ENCODE measurements at regions of chr2 and their contacts with region 1.

Region 1: GRCh38 chr2:27191053-27191829 is 20.6 kb upstream of the ATRAID start:
- H3K4me3 ChIP-seq: no peak overlapping the region
- H3K27ac ChIP-seq: no peak overlapping the region
- H3K4me1 ChIP-seq: peaks cover 3% of the 10 kb centered on the region; the same call in 1 of the 2 replicates
- CTCF ChIP-seq: peak; percentile 56; the same call in 1 of the 2 replicates

Region 2: DNA sequence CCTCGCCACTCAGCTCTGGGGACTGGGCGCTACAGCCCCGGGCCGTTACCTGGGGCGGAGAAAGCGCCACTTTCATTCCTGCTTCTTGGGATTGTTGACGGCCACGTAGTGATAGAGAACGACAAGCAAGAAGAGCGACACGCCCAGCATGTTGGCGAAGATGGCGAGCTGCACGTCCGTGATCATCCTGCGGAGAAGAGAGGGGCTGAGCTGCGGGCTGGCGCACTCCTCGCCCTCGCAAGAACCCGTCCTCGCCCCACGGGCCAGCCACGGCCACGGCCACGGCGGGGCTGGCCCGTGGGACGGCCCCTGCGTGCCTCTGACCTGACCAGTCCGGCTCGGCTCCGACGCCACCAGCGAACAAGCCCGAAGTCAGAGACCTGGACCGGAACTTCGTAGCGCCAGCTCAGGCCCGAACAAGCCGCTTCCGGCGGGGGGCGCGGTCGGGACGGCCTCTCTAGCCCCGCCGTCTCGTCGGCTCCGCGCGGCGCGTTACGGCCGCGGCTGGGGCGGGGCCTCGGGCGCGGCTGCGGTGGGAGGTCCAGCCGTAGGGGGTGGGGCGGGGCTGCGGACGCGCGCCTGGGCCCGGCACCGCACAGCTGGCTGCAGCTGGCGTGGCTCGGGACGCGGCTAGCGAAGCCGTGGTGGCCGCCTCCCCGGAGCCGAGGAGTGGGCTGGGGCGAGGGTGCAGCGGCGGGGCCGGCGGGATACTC is 119.8 kb before region 1 on chr2 and contains the start of gene OST4:
- CTCF ChIA-PET with region 1: no interaction called
- POLR2A ChIA-PET with region 1: no interaction called
- H3K4me3 ChIP-seq: peak within 1 kb of the TSS; percentile 90
- H3K27ac ChIP-seq: peak within 1 kb of the TSS; percentile 66; the same call in 1 of the 2 replicates
- H3K4me1 ChIP-seq: peaks cover 14% of the 10 kb centered on the region
- CTCF ChIP-seq: peak; percentile 76

Region 3: DNA sequence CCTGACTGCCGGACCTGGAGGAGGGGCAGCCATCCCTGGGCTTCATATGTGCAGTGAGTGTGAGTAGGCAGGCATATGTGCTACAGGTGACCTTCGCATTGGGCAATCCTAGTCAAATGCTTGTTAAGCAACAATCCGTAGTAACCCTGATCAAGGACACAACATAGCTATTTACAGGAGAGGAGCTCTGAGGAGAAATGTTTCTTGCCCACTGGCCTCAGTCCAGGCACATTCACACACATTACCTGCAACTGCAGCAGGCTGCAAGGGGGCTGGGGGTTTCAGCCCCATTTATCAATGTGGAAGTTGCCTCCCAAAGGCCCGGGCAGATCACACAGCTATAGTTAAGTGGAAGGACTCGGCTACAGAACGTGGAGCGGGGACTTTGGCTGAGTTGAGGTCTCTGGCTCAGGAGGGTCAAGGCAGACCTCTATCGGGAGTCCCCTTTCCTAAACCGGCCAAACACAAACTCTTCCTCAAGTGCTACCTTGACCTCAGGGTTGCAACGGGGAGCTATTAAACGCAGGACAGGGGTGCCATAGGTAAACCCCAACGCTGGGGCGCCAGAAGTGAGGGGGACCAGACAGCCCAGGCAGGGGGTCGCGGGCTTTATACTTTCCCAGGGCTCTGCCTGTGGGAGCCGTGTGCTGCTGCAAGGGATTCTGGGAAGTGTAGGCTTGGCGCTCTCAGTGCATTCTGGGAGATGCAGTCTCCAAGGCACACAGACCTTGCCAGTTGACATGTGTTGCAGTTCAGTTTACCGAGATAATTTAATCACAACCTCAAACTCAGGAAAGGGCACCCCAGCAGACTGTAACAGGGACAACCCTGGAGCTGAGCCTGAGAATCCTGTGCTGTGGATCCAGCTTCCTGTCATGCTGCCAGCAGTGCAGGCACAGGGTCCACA is 95.2 kb before region 1 on chr2:
- CTCF ChIA-PET with region 1: interaction called, 42 read pairs
- POLR2A ChIA-PET with region 1: no interaction called
- H3K4me3 ChIP-seq: no peak overlapping the region
- H3K27ac ChIP-seq: 0 out of 2 replicates have a peak overlapping the region, but pooled peaks have one; percentile 8
- H3K4me1 ChIP-seq: no peaks in the 10 kb centered on the region
- CTCF ChIP-seq: no peak

Region 4: DNA sequence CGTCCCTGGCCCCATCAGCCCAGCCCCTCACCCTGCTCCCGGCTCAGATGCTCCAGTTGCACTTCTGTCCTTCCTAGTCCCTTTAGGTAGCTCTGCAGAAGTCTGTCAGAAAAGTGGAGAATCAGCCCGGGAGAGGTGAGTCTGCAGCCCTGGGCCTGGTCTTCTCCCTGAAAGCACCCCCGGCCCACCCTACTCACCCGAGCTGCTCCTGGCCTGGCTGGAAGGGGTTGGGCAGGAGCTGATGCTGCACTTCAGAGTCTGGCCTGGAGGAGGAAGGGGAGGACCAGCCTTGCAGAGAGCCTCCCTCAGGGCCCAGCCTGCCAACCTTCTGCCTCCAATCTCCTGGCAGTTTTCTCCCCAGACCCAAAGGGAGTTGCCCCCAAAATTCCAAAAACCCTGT is 88.9 kb before region 1 on chr2:
- CTCF ChIA-PET with region 1: interaction called, 42 read pairs
- POLR2A ChIA-PET with region 1: no interaction called
- H3K4me3 ChIP-seq: no peak overlapping the region
- H3K27ac ChIP-seq: no peak overlapping the region
- H3K4me1 ChIP-seq: no peaks in the 10 kb centered on the region
- CTCF ChIP-seq: no peak

Measured in HEK293 (cell line).